Psoas muscle (tissue), 8 donors: ENCODE measurements at regions of chr5 and their contacts with region 1.

Region 1: GRCh38 chr5:163505368-163506094 is at the start of gene MAT2B:
- DNase-seq: peak; percentile 96 to 98
- ATAC-seq: peak; percentile 95 to 99 (median 97)
- H3K4me3 ChIP-seq: peak within 1 kb of the TSS; percentile 88
- H3K27ac ChIP-seq: peak within 1 kb of the TSS; percentile 99
- H3K4me1 ChIP-seq: peaks cover 39% of the 10 kb centered on the region
- H3K27me3 ChIP-seq: no peaks in the 10 kb centered on the region
- CTCF ChIP-seq: peak; percentile 48
- total RNA-seq, gene MAT2B: 27.3 to 35.9 (median 32.6) TPM

Region 2: GRCh38 chr5:163261647-163262269 is 243.8 kb before region 1 on chr5:
- intact Hi-C with region 1: no loop called
- DNase-seq: no peak
- ATAC-seq: no peak
- H3K4me3 ChIP-seq: no peak overlapping the region
- H3K27ac ChIP-seq: no peak overlapping the region
- H3K4me1 ChIP-seq: no peaks in the 10 kb centered on the region
- H3K27me3 ChIP-seq: no peaks in the 10 kb centered on the region
- CTCF ChIP-seq: no peak

Region 3: DNA sequence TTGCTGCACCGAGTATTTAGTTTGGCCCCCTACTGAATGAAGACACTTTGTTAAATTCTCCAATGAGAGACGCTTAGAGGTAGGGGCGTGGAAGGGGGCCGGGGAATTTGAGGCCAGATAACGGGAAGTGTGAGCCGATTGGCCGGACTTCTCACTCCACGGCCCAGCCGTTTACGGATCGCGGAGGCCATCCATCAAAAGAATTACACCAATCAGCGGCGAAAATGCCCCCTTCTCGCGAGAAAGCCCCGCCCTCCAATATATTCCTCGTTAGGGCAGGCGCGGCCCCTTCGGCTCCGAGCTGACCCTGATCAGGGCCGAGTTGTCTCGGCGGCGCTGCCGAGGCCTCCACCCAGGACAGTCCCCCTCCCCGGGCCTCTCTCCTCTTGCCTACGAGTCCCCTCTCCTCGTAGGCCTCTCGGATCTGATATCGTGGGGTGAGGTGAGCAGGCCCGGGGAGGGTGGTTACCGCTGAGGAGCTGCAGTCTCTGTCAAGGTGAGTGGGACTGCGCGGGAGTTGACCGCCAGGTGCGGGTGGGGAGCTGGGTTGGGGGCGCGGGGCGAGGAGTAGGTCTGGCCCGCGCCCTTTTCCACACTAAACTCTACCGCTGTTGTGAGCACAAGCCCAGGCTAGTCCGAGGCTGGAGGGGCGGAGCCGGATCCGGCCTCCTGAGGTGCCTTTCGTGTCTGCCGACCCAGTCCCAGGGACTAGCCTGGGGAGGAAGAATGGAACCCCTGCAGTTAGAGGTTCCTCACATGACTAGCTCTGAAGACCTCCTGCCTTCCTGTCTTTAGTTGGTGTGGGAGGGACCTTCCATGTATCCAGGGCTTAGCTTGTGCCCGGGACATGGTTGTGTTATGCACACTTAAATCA is 68.0 kb before region 1 on chr5 and contains the start of gene CCNG1:
- intact Hi-C with region 1: loop called in 1 of 2 experiments (anchors 1 kb)
- DNase-seq: peak; percentile 91 to 95
- ATAC-seq: peak; percentile 85 to 94 (median 87)
- H3K4me3 ChIP-seq: peak within 1 kb of the TSS; percentile 94
- H3K27ac ChIP-seq: peak within 1 kb of the TSS; percentile 96
- H3K4me1 ChIP-seq: peaks cover 38% of the 10 kb centered on the region
- H3K27me3 ChIP-seq: no peaks in the 10 kb centered on the region
- CTCF ChIP-seq: no peak
- total RNA-seq, gene CCNG1: 91.2 to 120 (median 109) TPM

Region 4: DNA sequence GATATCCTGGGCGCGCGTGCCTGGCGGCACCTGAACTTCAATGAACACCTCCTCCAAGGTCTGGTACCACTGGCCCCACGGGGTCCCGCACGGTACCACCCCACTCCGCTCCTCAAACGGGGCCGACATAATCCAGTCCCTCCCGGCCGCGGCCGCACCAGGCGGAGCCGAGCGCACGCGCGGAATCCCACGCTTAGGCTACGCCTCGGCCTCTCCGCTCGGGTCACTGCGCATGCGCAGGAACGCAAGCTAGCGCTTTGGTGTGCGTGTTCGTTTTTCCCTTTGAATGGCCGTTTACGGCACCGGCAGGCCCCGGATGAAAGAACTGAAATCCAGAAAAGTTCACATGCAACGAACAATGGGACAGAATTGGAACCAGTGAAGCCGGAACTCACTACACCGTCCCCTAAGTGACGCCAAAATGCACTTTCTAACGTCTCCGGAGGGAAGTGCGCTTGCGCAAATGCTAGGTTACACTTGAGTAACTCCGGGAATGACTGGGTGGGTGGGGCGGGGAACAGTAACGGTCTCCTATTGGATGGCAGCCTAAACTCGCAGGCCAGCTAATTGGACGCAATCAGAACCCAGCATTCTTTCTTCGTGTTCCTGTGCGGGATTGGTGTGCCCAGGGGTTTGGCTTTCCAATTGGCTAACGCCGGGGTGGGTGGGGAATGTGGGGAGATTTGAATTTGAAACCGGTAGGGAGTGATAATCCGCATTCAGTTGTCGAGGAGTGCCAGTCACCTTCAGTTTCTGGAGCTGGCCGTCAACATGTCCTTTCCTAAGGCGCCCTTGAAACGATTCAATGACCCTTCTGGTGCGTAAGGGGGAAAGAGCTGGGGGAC is 45.4 kb before region 1 on chr5 and contains the starts of genes HMMR and NUDCD2:
- intact Hi-C with region 1: loop called (anchors 2 kb)
- DNase-seq: peak; percentile 96 to 99
- ATAC-seq: peak; percentile 91 to 96 (median 94)
- H3K4me3 ChIP-seq: peak within 1 kb of the TSS; percentile 78
- H3K27ac ChIP-seq: peak within 1 kb of the TSS; percentile 95
- H3K4me1 ChIP-seq: peaks cover 30% of the 10 kb centered on the region
- H3K27me3 ChIP-seq: no peaks in the 10 kb centered on the region
- CTCF ChIP-seq: no peak
- total RNA-seq, gene HMMR: 0.14 to 1.4 (median 0.65) TPM
- total RNA-seq, gene NUDCD2: 13.6 to 26.3 (median 16.7) TPM